B cell (primary cell): ENCODE measurements at regions of chr13 and their contacts with region 1.

Region 1: GRCh38 chr13:21638319-21639282 is 32.3 kb upstream of the FGF9 start:
- DNase-seq: peak; percentile 57
- ATAC-seq: no peak
- H3K4me3 ChIP-seq: no peak overlapping the region
- H3K4me3 Mint-ChIP-seq: no peak overlapping the region
- H3K27ac ChIP-seq: no peak overlapping the region
- H3K27ac Mint-ChIP-seq: no peak overlapping the region
- H3K4me1 ChIP-seq: no peaks in the 10 kb centered on the region
- H3K4me1 Mint-ChIP-seq: peaks cover 2% of the 10 kb centered on the region
- H3K27me3 ChIP-seq: peaks cover 0 to 8% (median 0%) of the 10 kb centered on the region in 4 experiments
- H3K27me3 Mint-ChIP-seq: peaks cover 6% of the 10 kb centered on the region
- CTCF ChIP-seq: peak; percentile 90

Region 2: GRCh38 chr13:20637811-20638210 is 1000.8 kb before region 1 on chr13:
- CTCF ChIA-PET with region 1: no interaction called
- POLR2A ChIA-PET with region 1: no interaction called
- intact Hi-C with region 1: no loop called
- DNase-seq: no peak
- ATAC-seq: no peak
- H3K4me3 ChIP-seq: no peak overlapping the region
- H3K4me3 Mint-ChIP-seq: no peak overlapping the region
- H3K27ac ChIP-seq: no peak overlapping the region
- H3K27ac Mint-ChIP-seq: no peak overlapping the region
- H3K4me1 ChIP-seq: no peaks in the 10 kb centered on the region
- H3K4me1 Mint-ChIP-seq: no peaks in the 10 kb centered on the region
- H3K27me3 ChIP-seq: no peaks in the 10 kb centered on the region
- H3K27me3 Mint-ChIP-seq: no peaks in the 10 kb centered on the region
- CTCF ChIP-seq: no peak

Region 3: GRCh38 chr13:21256351-21256761 is 382.2 kb before region 1 on chr13:
- CTCF ChIA-PET with region 1: no interaction called
- POLR2A ChIA-PET with region 1: no interaction called
- intact Hi-C with region 1: no loop called
- DNase-seq: no peak
- ATAC-seq: no peak
- H3K4me3 ChIP-seq: no peak overlapping the region
- H3K4me3 Mint-ChIP-seq: no peak overlapping the region
- H3K27ac ChIP-seq: no peak overlapping the region
- H3K27ac Mint-ChIP-seq: no peak overlapping the region
- H3K4me1 ChIP-seq: no peaks in the 10 kb centered on the region
- H3K4me1 Mint-ChIP-seq: no peaks in the 10 kb centered on the region
- H3K27me3 ChIP-seq: no peaks in the 10 kb centered on the region
- H3K27me3 Mint-ChIP-seq: peaks cover 10% of the 10 kb centered on the region
- CTCF ChIP-seq: no peak

Region 4: DNA sequence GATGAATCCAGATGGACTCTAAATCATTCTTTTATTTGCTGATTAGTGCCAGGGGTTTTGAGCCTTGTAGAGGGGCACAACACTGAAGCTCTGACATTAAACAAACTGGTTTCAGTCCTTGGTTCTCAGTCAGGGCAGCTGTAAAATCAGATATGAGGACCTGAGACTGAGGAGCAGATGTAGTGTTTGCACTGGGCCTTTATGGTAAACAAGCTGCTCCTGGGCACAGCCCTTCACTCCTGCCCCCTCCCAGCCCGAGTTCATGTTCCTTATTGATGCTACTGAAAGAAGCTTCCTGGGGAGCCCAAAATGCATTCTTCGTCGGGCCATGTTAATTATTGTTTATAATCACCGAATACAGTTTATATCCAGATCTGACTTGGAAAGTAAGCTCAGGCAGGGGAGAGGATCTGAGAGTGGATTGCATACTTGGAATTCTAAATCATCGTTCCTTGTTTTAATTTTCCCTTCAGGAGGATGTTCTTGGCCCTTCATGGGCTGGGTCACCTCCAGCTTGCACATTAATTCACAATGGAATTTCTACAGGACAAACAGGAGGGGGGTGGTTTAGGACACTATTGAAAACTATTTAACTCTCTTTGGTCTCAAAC is 245.8 kb after region 1 on chr13:
- CTCF ChIA-PET with region 1: no interaction called
- POLR2A ChIA-PET with region 1: no interaction called
- intact Hi-C with region 1: no loop called
- DNase-seq: no peak
- ATAC-seq: no peak
- H3K4me3 ChIP-seq: no peak overlapping the region
- H3K4me3 Mint-ChIP-seq: no peak overlapping the region
- H3K27ac ChIP-seq: no peak overlapping the region
- H3K27ac Mint-ChIP-seq: no peak overlapping the region
- H3K4me1 ChIP-seq: no peaks in the 10 kb centered on the region
- H3K4me1 Mint-ChIP-seq: peaks cover 11% of the 10 kb centered on the region
- H3K27me3 ChIP-seq: peaks cover 0 to 5% (median 0%) of the 10 kb centered on the region in 4 experiments
- H3K27me3 Mint-ChIP-seq: no peaks in the 10 kb centered on the region
- CTCF ChIP-seq: no peak

Region 5: GRCh38 chr13:21909331-21909730 is 270.7 kb after region 1 on chr13:
- CTCF ChIA-PET with region 1: no interaction called
- POLR2A ChIA-PET with region 1: no interaction called
- intact Hi-C with region 1: no loop called
- DNase-seq: no peak
- ATAC-seq: no peak
- H3K4me3 ChIP-seq: no peak overlapping the region
- H3K4me3 Mint-ChIP-seq: no peak overlapping the region
- H3K27ac ChIP-seq: no peak overlapping the region
- H3K27ac Mint-ChIP-seq: no peak overlapping the region
- H3K4me1 ChIP-seq: no peaks in the 10 kb centered on the region
- H3K4me1 Mint-ChIP-seq: no peaks in the 10 kb centered on the region
- H3K27me3 ChIP-seq: no peaks in the 10 kb centered on the region
- H3K27me3 Mint-ChIP-seq: no peaks in the 10 kb centered on the region
- CTCF ChIP-seq: no peak

Region 6: GRCh38 chr13:22278336-22278929 is 639.8 kb after region 1 on chr13:
- CTCF ChIA-PET with region 1: interaction called, 70 read pairs
- POLR2A ChIA-PET with region 1: no interaction called
- intact Hi-C with region 1: loop called (anchors 1 kb)
- DNase-seq: peak; percentile 75
- ATAC-seq: peak; percentile 74
- H3K4me3 ChIP-seq: no peak overlapping the region
- H3K4me3 Mint-ChIP-seq: no peak overlapping the region
- H3K27ac ChIP-seq: no peak overlapping the region
- H3K27ac Mint-ChIP-seq: no peak overlapping the region
- H3K4me1 ChIP-seq: no peaks in the 10 kb centered on the region
- H3K4me1 Mint-ChIP-seq: peaks cover 6% of the 10 kb centered on the region
- H3K27me3 ChIP-seq: no peaks in the 10 kb centered on the region
- H3K27me3 Mint-ChIP-seq: no peaks in the 10 kb centered on the region
- CTCF ChIP-seq: peak; percentile 77

Region 7: GRCh38 chr13:22298530-22298929 is 659.9 kb after region 1 on chr13:
- CTCF ChIA-PET with region 1: interaction called, 7 read pairs
- POLR2A ChIA-PET with region 1: no interaction called
- intact Hi-C with region 1: loop called (anchors 5 kb)
- DNase-seq: no peak
- ATAC-seq: no peak
- H3K4me3 ChIP-seq: no peak overlapping the region
- H3K4me3 Mint-ChIP-seq: no peak overlapping the region
- H3K27ac ChIP-seq: no peak overlapping the region
- H3K27ac Mint-ChIP-seq: no peak overlapping the region
- H3K4me1 ChIP-seq: no peaks in the 10 kb centered on the region
- H3K4me1 Mint-ChIP-seq: no peaks in the 10 kb centered on the region
- H3K27me3 ChIP-seq: no peaks in the 10 kb centered on the region
- H3K27me3 Mint-ChIP-seq: peaks cover 2% of the 10 kb centered on the region
- CTCF ChIP-seq: no peak

Region 8: DNA sequence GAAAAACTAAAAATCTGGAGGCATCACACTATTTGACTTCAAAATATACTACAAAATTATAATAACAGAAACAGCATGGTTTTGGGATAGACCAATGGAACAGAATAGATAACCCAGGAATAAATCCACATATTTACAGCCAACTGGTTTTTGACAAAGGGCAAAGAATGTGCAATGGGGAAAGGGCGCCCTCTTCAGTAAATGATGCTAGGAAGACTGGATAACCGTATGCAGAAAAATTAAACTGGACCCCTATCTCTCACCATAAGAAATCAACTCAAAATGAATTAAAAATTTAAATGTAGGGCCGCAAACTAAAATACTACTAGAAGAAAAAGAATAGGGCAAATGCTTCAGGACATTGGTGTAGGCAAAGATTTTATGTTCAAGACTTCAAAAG is 1101.7 kb after region 1 on chr13:
- CTCF ChIA-PET with region 1: no interaction called
- POLR2A ChIA-PET with region 1: no interaction called
- intact Hi-C with region 1: loop called (anchors 5 kb)
- DNase-seq: no peak
- ATAC-seq: no peak
- H3K4me3 ChIP-seq: no peak overlapping the region
- H3K4me3 Mint-ChIP-seq: no peak overlapping the region
- H3K27ac ChIP-seq: no peak overlapping the region
- H3K27ac Mint-ChIP-seq: no peak overlapping the region
- H3K4me1 ChIP-seq: no peaks in the 10 kb centered on the region
- H3K4me1 Mint-ChIP-seq: no peaks in the 10 kb centered on the region
- H3K27me3 ChIP-seq: no peaks in the 10 kb centered on the region
- H3K27me3 Mint-ChIP-seq: no peaks in the 10 kb centered on the region
- CTCF ChIP-seq: no peak

Region 9: GRCh38 chr13:22757530-22758120 is 1119.0 kb after region 1 on chr13:
- CTCF ChIA-PET with region 1: interaction called, 33 read pairs
- POLR2A ChIA-PET with region 1: no interaction called
- intact Hi-C with region 1: loop called (anchors 1 kb)
- DNase-seq: no peak
- ATAC-seq: no peak
- H3K4me3 ChIP-seq: no peak overlapping the region
- H3K4me3 Mint-ChIP-seq: no peak overlapping the region
- H3K27ac ChIP-seq: no peak overlapping the region
- H3K27ac Mint-ChIP-seq: no peak overlapping the region
- H3K4me1 ChIP-seq: no peaks in the 10 kb centered on the region
- H3K4me1 Mint-ChIP-seq: no peaks in the 10 kb centered on the region
- H3K27me3 ChIP-seq: no peaks in the 10 kb centered on the region
- H3K27me3 Mint-ChIP-seq: no peaks in the 10 kb centered on the region
- CTCF ChIP-seq: no peak

Region 10: DNA sequence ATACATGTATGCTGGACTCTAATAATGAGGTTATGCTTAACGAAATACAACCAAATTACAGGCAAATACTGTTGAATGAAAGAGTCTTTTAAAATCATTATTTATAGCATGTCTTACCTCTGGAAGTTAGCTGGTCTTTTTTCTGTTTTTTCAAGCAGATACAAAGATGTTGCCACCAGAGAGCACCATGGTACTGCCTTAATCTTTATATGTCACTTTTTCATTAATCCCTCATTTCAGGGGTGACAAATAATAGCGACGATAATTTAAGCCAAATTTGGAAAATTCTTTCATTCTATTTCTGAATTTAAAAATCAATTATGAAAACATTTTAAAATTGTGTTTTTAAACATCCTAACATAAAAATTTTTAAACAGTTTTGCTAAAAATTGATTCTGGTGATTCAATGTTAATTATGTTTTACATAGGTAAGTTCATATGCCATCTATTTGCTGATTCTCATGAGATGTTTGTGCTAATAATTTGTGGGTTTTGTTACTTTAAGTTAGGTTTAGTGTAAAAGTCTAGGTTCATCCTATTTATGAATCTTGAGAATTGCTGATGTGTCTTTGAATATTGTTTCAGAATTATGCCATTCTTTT is 1162.9 kb after region 1 on chr13:
- CTCF ChIA-PET with region 1: interaction called, 6 read pairs
- POLR2A ChIA-PET with region 1: no interaction called
- intact Hi-C with region 1: loop called (anchors 5 kb)
- DNase-seq: no peak
- ATAC-seq: no peak
- H3K4me3 ChIP-seq: no peak overlapping the region
- H3K4me3 Mint-ChIP-seq: no peak overlapping the region
- H3K27ac ChIP-seq: no peak overlapping the region
- H3K27ac Mint-ChIP-seq: no peak overlapping the region
- H3K4me1 ChIP-seq: no peaks in the 10 kb centered on the region
- H3K4me1 Mint-ChIP-seq: no peaks in the 10 kb centered on the region
- H3K27me3 ChIP-seq: no peaks in the 10 kb centered on the region
- H3K27me3 Mint-ChIP-seq: no peaks in the 10 kb centered on the region
- CTCF ChIP-seq: no peak

Region 11: DNA sequence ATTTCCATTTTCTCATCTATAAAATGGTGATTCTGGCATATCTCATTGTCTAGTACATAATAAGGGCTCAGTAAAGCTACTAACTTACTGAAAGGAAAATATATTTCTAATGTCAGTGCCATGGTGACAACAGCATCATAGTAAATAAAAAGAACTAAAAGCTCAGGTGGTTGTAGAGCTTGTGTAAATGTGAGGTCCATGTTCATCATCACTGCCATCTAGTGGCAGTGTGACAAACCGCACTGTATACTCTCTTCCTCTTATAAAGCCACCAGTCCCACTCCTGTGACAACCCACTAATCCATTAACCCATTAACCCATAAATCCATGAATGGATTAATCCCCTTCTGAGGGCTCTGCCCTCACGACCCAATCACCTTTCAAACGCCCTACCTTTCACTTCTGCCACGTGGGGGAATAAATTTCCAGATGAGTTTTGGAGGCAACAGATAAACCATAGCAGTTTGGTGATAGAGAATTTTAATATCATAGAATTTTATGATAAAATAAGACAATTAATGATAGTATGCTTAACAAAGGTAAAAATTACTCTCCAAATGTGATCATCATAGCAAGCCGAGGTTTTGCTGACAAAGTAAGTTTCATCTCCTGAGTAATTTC is 1381.7 kb after region 1 on chr13:
- CTCF ChIA-PET with region 1: interaction called, 11 read pairs
- POLR2A ChIA-PET with region 1: no interaction called
- intact Hi-C with region 1: no loop called
- DNase-seq: peak; percentile 54
- ATAC-seq: peak; percentile 65
- H3K4me3 ChIP-seq: no peak overlapping the region
- H3K4me3 Mint-ChIP-seq: no peak overlapping the region
- H3K27ac ChIP-seq: no peak overlapping the region
- H3K27ac Mint-ChIP-seq: no peak overlapping the region
- H3K4me1 ChIP-seq: no peaks in the 10 kb centered on the region
- H3K4me1 Mint-ChIP-seq: no peaks in the 10 kb centered on the region
- H3K27me3 ChIP-seq: no peaks in the 10 kb centered on the region
- H3K27me3 Mint-ChIP-seq: peaks cover 3% of the 10 kb centered on the region
- CTCF ChIP-seq: peak; percentile 84